ENCODE measurements at regions of chr3 and their contacts with region 1.

Region 1: GRCh38 chr3:18559331-18559842 is 134.2 kb upstream of the SATB1 start:
- DNase-seq: peak in 1 of 3 donors; percentile 46
- ATAC-seq: peak; percentile 94
- H3K4me3 ChIP-seq: no peak overlapping the region
- H3K4me1 ChIP-seq: no peaks in the 10 kb centered on the region
- CTCF ChIP-seq: peak; percentile 57

Region 2: DNA sequence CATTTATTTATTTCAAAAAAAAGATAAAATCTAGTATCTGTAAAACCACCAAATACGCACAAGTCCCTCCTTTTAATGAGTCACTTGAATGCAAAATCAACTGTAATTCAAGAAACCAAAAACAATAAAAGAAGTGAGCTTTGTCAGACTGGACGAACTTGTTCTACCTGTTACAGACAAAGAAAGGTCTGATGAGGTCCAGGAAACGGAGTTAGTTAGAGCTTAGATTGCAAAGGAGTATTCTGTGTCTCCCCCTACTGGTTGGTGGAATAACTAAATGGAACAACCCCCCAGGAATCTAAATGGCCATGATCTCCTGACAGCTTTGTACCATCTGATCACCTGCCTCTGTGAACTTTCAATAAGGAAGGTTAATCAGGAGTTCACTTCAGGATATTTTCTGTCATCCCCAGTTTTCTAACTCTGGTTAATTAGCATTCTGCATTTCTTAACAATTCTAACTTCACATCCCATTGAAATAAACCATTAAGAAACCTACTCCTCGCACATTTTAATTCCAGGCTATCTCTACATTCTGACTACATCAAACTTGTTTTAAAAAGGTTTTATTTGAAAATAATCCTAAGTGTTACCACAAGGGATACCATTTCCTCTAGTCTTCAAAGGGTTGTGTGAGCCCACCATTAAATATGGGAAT is 198.8 kb after region 1 on chr3:
- intact Hi-C with region 1: loop called in 1 of 2 experiments (anchors 2 kb)
- DNase-seq: peak in 1 of 3 donors; percentile 81
- ATAC-seq: peak; percentile 98
- H3K4me3 ChIP-seq: no peak overlapping the region
- H3K4me1 ChIP-seq: peaks cover 11% of the 10 kb centered on the region
- CTCF ChIP-seq: peak; percentile 27